ENCODE measurements at regions of chr6 and their contacts with region 1.

Region 1: DNA sequence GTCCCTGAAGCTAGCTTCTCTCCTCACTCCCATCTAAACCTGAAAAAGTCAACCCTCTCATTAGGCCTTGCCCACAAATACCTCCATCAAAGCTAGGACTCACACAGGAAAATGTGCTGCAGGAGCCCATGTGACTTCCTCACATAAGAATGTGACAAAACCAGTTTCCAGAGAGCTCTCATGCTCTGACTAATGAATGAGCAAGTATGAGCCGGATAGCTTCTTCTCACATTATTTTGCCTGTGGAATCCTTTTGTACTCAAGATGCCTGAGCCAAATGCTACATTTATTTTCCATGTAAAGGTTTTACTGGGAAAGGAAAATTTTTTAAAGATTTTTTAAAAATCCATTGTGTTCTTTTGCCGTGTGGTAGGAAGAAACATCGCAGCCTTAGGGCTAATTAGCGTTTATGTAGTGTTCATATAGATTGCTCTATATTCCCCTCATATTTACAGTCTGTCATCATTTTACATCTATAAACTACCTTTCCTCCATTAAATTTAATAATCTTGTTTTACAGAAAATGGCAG is 68.6 kb upstream of the CCN6 start:
- DNase-seq: peak; percentile 98
- H3K4me3 ChIP-seq: no peak overlapping the region
- H3K27ac ChIP-seq: peak overlapping the region; percentile 94
- H3K4me1 ChIP-seq: peaks cover 56% of the 10 kb centered on the region
- H3K27me3 ChIP-seq: no peaks in the 10 kb centered on the region
- CTCF ChIP-seq: no peak

Region 2: DNA sequence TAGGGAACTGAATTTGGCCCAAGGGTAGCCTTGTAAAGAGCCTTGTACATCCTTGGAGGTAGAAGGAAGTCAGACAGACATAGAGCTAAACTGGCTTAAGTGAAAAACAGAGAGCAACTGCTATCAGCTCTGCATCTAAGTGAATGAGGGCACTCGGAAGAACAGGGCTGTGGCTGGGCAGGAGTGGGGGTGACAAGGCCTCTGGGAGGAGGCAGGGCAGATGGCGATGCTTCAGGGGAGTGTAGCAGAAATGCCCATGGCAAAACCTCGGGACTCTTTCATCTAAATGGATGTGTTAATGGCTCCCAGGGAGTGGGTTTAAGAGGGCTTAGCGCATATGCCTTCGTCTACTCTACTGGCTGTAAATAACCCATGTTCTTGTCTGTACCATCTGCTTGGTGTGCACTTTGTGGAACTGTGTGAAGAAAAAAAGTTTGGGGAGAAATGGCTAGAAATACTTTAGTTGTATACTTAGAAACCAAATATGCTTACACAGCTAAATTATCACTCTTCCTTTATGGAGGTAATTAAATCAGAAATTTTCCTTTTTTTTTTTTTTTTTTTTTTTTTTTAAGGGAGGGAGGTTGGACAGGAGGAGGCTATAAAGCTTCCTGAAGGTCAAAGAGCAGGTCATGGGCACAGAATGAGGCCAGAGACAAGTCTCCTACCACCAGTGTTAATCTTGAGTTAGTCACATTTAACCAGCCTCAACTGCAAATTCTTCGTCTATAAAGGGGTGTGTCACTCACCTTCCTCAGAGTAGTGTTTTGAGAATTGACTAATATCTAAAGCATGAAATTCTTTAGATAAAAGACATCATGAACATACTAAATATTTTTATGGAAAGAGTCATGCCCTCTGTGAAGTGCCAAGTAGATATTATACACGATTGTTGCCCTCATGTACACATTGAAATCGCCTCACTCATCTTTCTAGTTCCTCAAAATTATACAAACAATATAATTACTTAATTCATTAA is 172.9 kb before region 1 on chr6:
- CTCF ChIA-PET with region 1: no interaction called
- dilution Hi-C with region 1: no loop called
- in situ Hi-C with region 1: no loop called
- intact Hi-C with region 1: loop called (anchors 5 kb)
- DNase-seq: peak; percentile 65
- H3K4me3 ChIP-seq: no peak overlapping the region
- H3K27ac ChIP-seq: no peak overlapping the region
- H3K4me1 ChIP-seq: peaks cover 22% of the 10 kb centered on the region
- H3K27me3 ChIP-seq: no peaks in the 10 kb centered on the region
- CTCF ChIP-seq: no peak

Region 3: DNA sequence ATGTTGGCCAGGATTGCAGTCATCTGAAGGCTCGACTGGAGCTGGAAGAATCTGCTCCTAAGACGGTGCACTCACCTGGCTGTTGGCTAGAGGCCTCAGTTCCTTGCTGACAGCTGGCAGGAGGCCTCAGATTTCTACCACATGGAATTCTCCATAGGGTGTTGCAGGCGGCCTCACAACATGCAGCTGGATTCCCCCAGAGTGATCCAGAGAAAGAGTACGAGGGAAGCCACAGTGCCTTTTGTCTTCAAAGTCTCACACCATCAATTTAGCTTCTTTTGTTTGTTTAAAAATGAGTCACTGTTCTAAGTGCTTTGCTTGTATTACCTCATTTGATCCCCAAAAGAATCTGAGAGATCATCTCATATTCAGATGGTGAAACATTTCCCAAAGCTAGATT is 46.6 kb before region 1 on chr6:
- CTCF ChIA-PET with region 1: no interaction called
- dilution Hi-C with region 1: no loop called
- in situ Hi-C with region 1: no loop called
- intact Hi-C with region 1: loop called (anchors 5 kb)
- DNase-seq: peak; percentile 75
- H3K4me3 ChIP-seq: no peak overlapping the region
- H3K27ac ChIP-seq: no peak overlapping the region
- H3K4me1 ChIP-seq: peaks cover 4% of the 10 kb centered on the region
- H3K27me3 ChIP-seq: no peaks in the 10 kb centered on the region
- CTCF ChIP-seq: no peak

Region 4: GRCh38 chr6:111973118-111973761 is 12.0 kb before region 1 on chr6:
- CTCF ChIA-PET with region 1: no interaction called
- dilution Hi-C with region 1: no loop called
- in situ Hi-C with region 1: no loop called
- intact Hi-C with region 1: loop called (anchors 1 kb)
- DNase-seq: peak; percentile 93
- H3K4me3 ChIP-seq: peak overlapping the region in 2 of 3 experiments; percentile 8 to 19
- H3K27ac ChIP-seq: peak overlapping the region; percentile 99
- H3K4me1 ChIP-seq: peaks cover 31% of the 10 kb centered on the region
- H3K27me3 ChIP-seq: no peaks in the 10 kb centered on the region
- CTCF ChIP-seq: no peak

Region 5: GRCh38 chr6:112557435-112557834 is 572.2 kb after region 1 on chr6:
- CTCF ChIA-PET with region 1: no interaction called
- dilution Hi-C with region 1: no loop called
- in situ Hi-C with region 1: no loop called
- intact Hi-C with region 1: no loop called
- DNase-seq: no peak
- H3K4me3 ChIP-seq: no peak overlapping the region
- H3K27ac ChIP-seq: no peak overlapping the region
- H3K4me1 ChIP-seq: no peaks in the 10 kb centered on the region
- H3K27me3 ChIP-seq: peaks cover 2% of the 10 kb centered on the region
- CTCF ChIP-seq: no peak

Measured in mammary epithelial cell (primary cell).